ENCODE measurements at regions of chr21 and their contacts with region 1.

Region 1: DNA sequence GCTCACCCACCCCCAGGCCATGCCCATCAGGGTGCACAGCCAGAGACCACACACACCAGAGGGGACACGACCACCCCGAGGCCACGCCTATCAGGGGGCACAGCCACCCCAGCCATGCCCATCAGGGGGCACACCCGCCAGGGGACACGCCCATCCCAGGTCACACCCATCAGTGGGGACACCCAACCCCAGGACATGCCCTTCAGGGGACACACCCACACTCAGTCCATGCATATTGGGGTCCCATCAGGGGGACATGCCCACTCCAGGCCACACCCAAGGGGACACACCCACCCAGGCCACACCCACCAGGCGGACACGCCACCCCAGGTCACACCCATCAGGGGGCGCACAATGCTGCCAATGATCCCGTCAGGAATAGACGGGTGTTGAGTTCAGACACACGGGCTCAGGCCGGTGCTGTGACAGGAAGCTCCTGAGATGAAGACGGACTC is 20.7 kb downstream of the MCM3AP start:
- DNase-seq: no peak
- ATAC-seq: no peak
- H3K4me3 ChIP-seq: no peak overlapping the region
- H3K27ac ChIP-seq: no peak overlapping the region
- H3K4me1 ChIP-seq: peaks cover 7% of the 10 kb centered on the region
- H3K27me3 ChIP-seq: no peaks in the 10 kb centered on the region
- CTCF ChIP-seq: no peak

Region 2: GRCh38 chr21:46285761-46286496 is 21.2 kb after region 1 on chr21 and contains the start of gene YBEY:
- CTCF ChIA-PET with region 1: no interaction called
- POLR2A ChIA-PET with region 1: no interaction called
- intact Hi-C with region 1: loop called (anchors 1 kb)
- DNase-seq: peak; percentile 92
- ATAC-seq: peak; percentile 90
- H3K4me3 ChIP-seq: peak within 1 kb of the TSS; percentile 75
- H3K27ac ChIP-seq: peak within 1 kb of the TSS; percentile 84
- H3K4me1 ChIP-seq: peaks cover 30% of the 10 kb centered on the region
- H3K27me3 ChIP-seq: no peaks in the 10 kb centered on the region
- CTCF ChIP-seq: peak; percentile 46; the same call in 1 of the 2 replicates
- total RNA-seq, gene YBEY: 38.2 and 39.0 TPM in 2 replicates

Measured in PC-3 (cell line).